Left cardiac atrium (tissue), 4 donors: ENCODE measurements at regions of chr17 and their contacts with region 1.

Region 1: GRCh38 chr17:8785547-8786413 is 13.4 kb downstream of the MFSD6L start:
- DNase-seq: peak; percentile 79
- ATAC-seq: peak; percentile 93 to 94

Region 2: GRCh38 chr17:8409966-8410864 is 375.6 kb before region 1 on chr17:
- intact Hi-C with region 1: loop called (anchors 2 kb)
- DNase-seq: peak; percentile 88
- ATAC-seq: peak; percentile 93 to 94

Region 3: DNA sequence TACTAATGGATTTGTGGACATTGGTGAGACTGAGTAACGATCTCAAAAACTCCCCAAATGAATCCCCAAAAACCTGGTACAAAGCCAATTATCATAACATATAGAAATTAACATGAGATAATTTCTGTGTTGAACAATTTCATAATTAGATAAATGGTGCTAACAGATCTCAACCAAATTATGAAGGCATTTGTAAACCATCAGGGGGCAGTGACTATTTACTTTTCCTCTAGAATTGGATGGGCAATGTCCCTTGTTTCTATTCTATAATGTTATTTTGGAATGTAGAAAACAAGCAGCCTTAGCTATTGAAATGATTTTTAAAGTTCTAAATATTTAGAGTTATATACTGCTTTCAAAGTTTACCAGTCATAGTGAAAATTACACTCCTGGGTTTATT is 213.0 kb before region 1 on chr17:
- intact Hi-C with region 1: loop called in 1 of 2 experiments (anchors 10 kb)
- DNase-seq: no peak
- ATAC-seq: no peak